ENCODE measurements at regions of chr16 and their contacts with region 1.

Region 1: GRCh38 chr16:82263521-82264143 is 93.6 kb upstream of the MPHOSPH6 start:
- DNase-seq: peak in 1 of 2 donors; percentile 50
- ATAC-seq: peak; percentile 90
- H3K4me3 ChIP-seq: no peak overlapping the region
- H3K27ac ChIP-seq: peak overlapping the region in 1 of 2 donors; percentile 52
- H3K4me1 ChIP-seq: peaks cover 3 to 4% of the 10 kb centered on the region in 2 donors
- H3K27me3 ChIP-seq: no peaks in the 10 kb centered on the region

Region 2: GRCh38 chr16:82344157-82344556 is 80.5 kb after region 1 on chr16:
- intact Hi-C with region 1: loop called (anchors 1 kb)
- DNase-seq: no peak
- ATAC-seq: no peak
- H3K4me3 ChIP-seq: no peak overlapping the region
- H3K27ac ChIP-seq: no peak overlapping the region
- H3K4me1 ChIP-seq: no peaks in the 10 kb centered on the region
- H3K27me3 ChIP-seq: no peaks in the 10 kb centered on the region

Region 3: GRCh38 chr16:82379551-82379950 is 115.9 kb after region 1 on chr16:
- intact Hi-C with region 1: no loop called
- DNase-seq: no peak
- ATAC-seq: no peak
- H3K4me3 ChIP-seq: no peak overlapping the region
- H3K27ac ChIP-seq: no peak overlapping the region
- H3K4me1 ChIP-seq: no peaks in the 10 kb centered on the region
- H3K27me3 ChIP-seq: no peaks in the 10 kb centered on the region

Region 4: DNA sequence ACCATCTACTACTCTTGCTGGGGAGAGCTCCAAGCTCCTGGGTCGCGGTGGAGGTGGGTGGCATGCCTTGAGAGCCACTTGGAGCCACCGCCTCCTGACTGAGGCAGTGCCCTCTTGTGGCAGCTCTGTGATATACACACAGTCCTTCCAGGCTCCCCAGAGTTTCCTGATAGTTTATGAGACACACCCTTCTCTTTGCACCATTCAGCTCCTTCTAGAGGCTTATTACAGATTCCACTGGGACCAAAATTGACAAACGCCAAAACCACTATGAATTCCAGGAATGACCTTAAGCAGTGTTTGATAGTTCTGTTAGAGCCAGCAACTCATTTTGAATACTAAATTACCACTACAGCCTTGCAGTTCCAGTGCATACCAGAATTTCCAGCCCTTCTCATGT is 193.1 kb after region 1 on chr16:
- intact Hi-C with region 1: loop called (anchors 1 to 5 kb)
- DNase-seq: peak in 1 of 2 donors; percentile 81
- ATAC-seq: peak; percentile 65
- H3K4me3 ChIP-seq: no peak overlapping the region
- H3K27ac ChIP-seq: no peak overlapping the region
- H3K4me1 ChIP-seq: no peaks in the 10 kb centered on the region
- H3K27me3 ChIP-seq: no peaks in the 10 kb centered on the region

Region 5: GRCh38 chr16:82518811-82519210 is 255.2 kb after region 1 on chr16:
- intact Hi-C with region 1: no loop called
- DNase-seq: no peak
- ATAC-seq: no peak
- H3K4me3 ChIP-seq: no peak overlapping the region
- H3K27ac ChIP-seq: no peak overlapping the region
- H3K4me1 ChIP-seq: no peaks in the 10 kb centered on the region
- H3K27me3 ChIP-seq: no peaks in the 10 kb centered on the region

Region 6: GRCh38 chr16:82580298-82580890 is 316.8 kb after region 1 on chr16:
- intact Hi-C with region 1: loop called in 1 of 2 experiments (anchors 10 kb)
- DNase-seq: no peak
- ATAC-seq: no peak
- H3K4me3 ChIP-seq: no peak overlapping the region
- H3K27ac ChIP-seq: no peak overlapping the region
- H3K4me1 ChIP-seq: no peaks in the 10 kb centered on the region
- H3K27me3 ChIP-seq: peaks cover 0 to 2% of the 10 kb centered on the region in 2 donors

Region 7: GRCh38 chr16:83449861-83450260 is 1186.2 kb after region 1 on chr16:
- intact Hi-C with region 1: loop called in 1 of 2 experiments (anchors 5 kb)
- DNase-seq: no peak
- ATAC-seq: no peak
- H3K4me3 ChIP-seq: no peak overlapping the region
- H3K27ac ChIP-seq: no peak overlapping the region
- H3K4me1 ChIP-seq: no peaks in the 10 kb centered on the region
- H3K27me3 ChIP-seq: no peaks in the 10 kb centered on the region

Measured in aorta (tissue), 5 donors.